ENCODE measurements at regions of chr5 and their contacts with region 1.

Region 1: GRCh38 chr5:59579101-59579823 is 314.3 kb downstream of the PDE4D start:
- DNase-seq: no peak
- ATAC-seq: no peak
- H3K4me3 ChIP-seq: no peak overlapping the region
- H3K4me3 Mint-ChIP-seq: no peak overlapping the region
- H3K27ac ChIP-seq: no peak overlapping the region
- H3K27ac Mint-ChIP-seq: no peak overlapping the region
- H3K4me1 ChIP-seq: peaks cover 4% of the 10 kb centered on the region in 2 donors
- H3K4me1 Mint-ChIP-seq: peaks cover 13% of the 10 kb centered on the region
- H3K27me3 ChIP-seq: no peaks in the 10 kb centered on the region
- H3K27me3 Mint-ChIP-seq: no peaks in the 10 kb centered on the region
- CTCF ChIP-seq: no peak

Region 2: GRCh38 chr5:58517198-58517597 is 1062.1 kb before region 1 on chr5:
- CTCF ChIA-PET with region 1: no interaction called
- POLR2A ChIA-PET with region 1: no interaction called
- intact Hi-C with region 1: no loop called
- DNase-seq: no peak
- ATAC-seq: no peak
- H3K4me3 ChIP-seq: no peak overlapping the region
- H3K4me3 Mint-ChIP-seq: no peak overlapping the region
- H3K27ac ChIP-seq: no peak overlapping the region
- H3K27ac Mint-ChIP-seq: no peak overlapping the region
- H3K4me1 ChIP-seq: no peaks in the 10 kb centered on the region
- H3K4me1 Mint-ChIP-seq: no peaks in the 10 kb centered on the region
- H3K27me3 ChIP-seq: no peaks in the 10 kb centered on the region
- H3K27me3 Mint-ChIP-seq: no peaks in the 10 kb centered on the region
- CTCF ChIP-seq: no peak

Region 3: GRCh38 chr5:59592101-59592500 is 12.8 kb after region 1 on chr5:
- CTCF ChIA-PET with region 1: no interaction called
- POLR2A ChIA-PET with region 1: no interaction called
- intact Hi-C with region 1: loop called (anchors 2 kb)
- DNase-seq: no peak
- ATAC-seq: no peak
- H3K4me3 ChIP-seq: no peak overlapping the region
- H3K4me3 Mint-ChIP-seq: no peak overlapping the region
- H3K27ac ChIP-seq: peak overlapping the region in 1 of 2 donors; percentile 30
- H3K27ac Mint-ChIP-seq: no peak overlapping the region
- H3K4me1 ChIP-seq: peaks cover 19 to 24% of the 10 kb centered on the region in 2 donors
- H3K4me1 Mint-ChIP-seq: peaks cover 21% of the 10 kb centered on the region
- H3K27me3 ChIP-seq: peaks cover 0 to 2% (median 0%) of the 10 kb centered on the region in 4 experiments
- H3K27me3 Mint-ChIP-seq: peaks cover 2% of the 10 kb centered on the region
- CTCF ChIP-seq: no peak